ENCODE measurements at regions of chr19 and their contacts with region 1.

Region 1: DNA sequence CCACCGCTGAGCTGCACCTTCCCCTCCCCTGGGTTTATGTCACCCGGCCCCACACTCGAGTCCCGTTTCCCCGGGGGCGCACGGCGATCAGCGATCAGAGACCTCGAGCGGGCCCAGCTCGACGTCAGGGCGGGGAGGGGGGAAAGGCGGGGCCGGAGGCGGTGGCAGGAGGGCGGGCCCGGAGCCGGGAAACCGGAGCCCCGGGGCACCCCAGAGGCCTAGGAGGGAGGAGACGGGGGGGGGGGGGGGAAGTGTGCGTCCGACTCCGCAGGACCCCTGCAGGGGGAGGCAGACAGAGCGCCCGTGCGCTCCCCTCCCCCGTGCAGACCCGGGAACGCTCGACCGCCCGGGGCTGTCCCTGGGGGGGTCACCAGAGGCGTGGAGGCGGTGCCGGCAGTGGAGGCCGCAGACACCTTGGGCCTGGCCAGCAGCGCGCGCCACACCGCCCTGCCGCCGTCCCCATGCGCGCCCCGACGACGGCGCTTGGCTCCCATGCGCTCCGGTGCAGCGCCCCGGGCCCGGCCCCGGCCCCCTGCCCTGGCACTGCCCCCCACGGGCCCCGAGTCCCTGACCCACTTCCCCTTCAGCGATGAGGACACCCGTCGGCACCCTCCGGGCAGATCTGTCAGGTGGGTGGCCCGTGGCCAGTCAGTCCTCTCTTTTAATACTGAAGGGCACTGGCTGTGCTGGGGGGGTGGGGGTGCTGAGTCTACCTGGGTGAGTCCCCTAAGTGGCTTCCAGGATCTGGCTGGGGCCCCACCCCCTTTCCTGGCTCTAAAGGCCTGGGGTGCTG is 11.8 kb downstream of the PDE4A start:
- DNase-seq: no peak

Region 2: DNA sequence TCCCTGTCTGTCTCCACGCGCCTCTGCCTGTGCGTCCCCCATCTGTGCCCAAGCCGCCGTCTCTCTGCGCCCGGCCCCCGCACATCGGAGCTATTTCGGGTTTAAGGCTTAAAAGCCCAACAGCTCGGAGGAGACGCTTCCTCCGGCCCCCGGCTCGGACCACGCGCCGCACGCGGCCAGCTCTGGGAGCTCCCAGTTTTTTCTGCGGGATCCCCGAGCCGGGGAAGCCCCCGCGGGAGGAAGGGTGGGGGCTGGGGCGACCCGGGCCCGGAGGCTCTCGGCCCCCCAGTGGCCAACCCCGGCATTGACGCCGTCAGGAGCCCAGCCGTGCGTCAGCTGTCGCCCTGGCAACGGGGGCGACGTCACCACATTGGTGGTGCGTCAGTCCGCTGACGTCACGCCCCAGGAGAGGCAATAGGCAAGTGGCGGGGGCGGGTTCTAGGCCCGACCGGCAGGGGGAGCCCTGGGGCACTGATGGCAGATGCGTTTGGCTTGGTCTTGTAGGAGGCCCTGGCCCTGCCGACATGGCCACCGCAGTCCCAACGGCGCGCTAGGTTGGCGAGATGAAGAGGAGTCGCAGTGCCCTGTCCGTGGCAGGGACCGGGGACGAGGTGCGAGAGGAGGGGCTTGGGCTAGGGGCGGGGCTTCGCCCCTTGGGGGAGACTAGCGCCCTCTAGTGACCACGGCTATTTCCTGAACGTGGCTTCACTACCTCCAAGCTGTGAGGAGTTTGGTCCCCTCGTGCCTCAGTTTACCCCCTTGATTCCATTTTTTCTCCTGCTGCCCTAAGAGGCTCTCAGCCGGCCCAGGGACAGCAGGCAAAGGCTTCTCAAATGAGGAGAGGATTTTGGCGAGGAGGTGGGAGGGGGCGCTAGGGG is 15.5 kb before region 1 on chr19:
- CTCF ChIA-PET with region 1: interaction called, 22 read pairs
- POLR2A ChIA-PET with region 1: interaction called, 3 read pairs
- DNase-seq: peak; percentile 93

Region 3: GRCh38 chr19:10449037-10449436 is 16.9 kb after region 1 on chr19:
- CTCF ChIA-PET with region 1: no interaction called
- POLR2A ChIA-PET with region 1: no interaction called
- DNase-seq: no peak

Region 4: DNA sequence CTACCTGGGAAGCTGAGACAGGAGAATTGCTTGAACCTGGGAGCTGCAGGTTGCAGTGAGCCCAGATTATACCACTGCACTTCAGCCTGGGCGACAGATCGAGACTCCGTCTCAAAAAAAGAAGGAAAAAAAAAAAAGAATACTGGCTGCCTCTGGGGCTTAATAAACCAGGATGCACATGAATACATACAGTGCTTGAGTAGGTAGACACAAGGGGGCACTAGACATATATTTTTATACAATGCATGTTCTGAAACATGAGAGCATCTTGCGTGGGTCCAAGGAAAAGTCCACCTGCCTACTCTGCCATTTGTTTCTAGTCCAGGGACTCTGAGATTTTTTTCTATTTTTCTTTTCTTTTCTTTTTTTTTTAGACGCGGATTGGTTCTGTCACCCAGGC is 39.8 kb after region 1 on chr19:
- CTCF ChIA-PET with region 1: no interaction called
- POLR2A ChIA-PET with region 1: no interaction called
- DNase-seq: peak; percentile 47

Region 5: GRCh38 chr19:10602330-10603083 is 170.4 kb after region 1 on chr19:
- CTCF ChIA-PET with region 1: no interaction called
- POLR2A ChIA-PET with region 1: no interaction called
- DNase-seq: peak; percentile 97

Measured in HEK293T (cell line).